ENCODE measurements at regions of chr10 and their contacts with region 1.

Region 1: GRCh38 chr10:101141616-101142532 is 10.8 kb downstream of the TLX1 start:
- DNase-seq: peak; percentile 72 to 85
- H3K4me3 ChIP-seq: no peak overlapping the region
- H3K27ac ChIP-seq: no peak overlapping the region
- H3K4me1 ChIP-seq: peaks cover 0 to 36% (median 23%) of the 10 kb centered on the region in 4 donors
- H3K27me3 ChIP-seq: peaks cover 0 to 98% of the 10 kb centered on the region in 2 donors
- CTCF ChIP-seq: peak; percentile 91 to 96

Region 2: GRCh38 chr10:101032637-101033201 is 109.2 kb before region 1 on chr10:
- intact Hi-C with region 1: no loop called
- DNase-seq: peak; percentile 80 to 87
- H3K4me3 ChIP-seq: peak overlapping the region; percentile 69 to 88
- H3K27ac ChIP-seq: peak overlapping the region; percentile 99
- H3K4me1 ChIP-seq: peaks cover 0 to 36% (median 22%) of the 10 kb centered on the region in 4 donors
- H3K27me3 ChIP-seq: peaks cover 0 to 8% of the 10 kb centered on the region in 2 donors
- CTCF ChIP-seq: no peak

Region 3: GRCh38 chr10:101047961-101048892 is 93.6 kb before region 1 on chr10:
- intact Hi-C with region 1: loop called (anchors 5 kb)
- DNase-seq: no peak
- H3K4me3 ChIP-seq: no peak overlapping the region
- H3K27ac ChIP-seq: no peak overlapping the region
- H3K4me1 ChIP-seq: peaks cover 0 to 23% (median 14%) of the 10 kb centered on the region in 4 donors
- H3K27me3 ChIP-seq: peaks cover 3 to 57% of the 10 kb centered on the region in 2 donors
- CTCF ChIP-seq: no peak

Region 4: GRCh38 chr10:101095542-101096213 is 46.2 kb before region 1 on chr10:
- intact Hi-C with region 1: loop called (anchors 2 kb)
- DNase-seq: peak; percentile 42 to 69
- H3K4me3 ChIP-seq: no peak overlapping the region
- H3K27ac ChIP-seq: no peak overlapping the region
- H3K4me1 ChIP-seq: no peaks in the 10 kb centered on the region
- H3K27me3 ChIP-seq: peaks cover 0 to 90% of the 10 kb centered on the region in 2 donors
- CTCF ChIP-seq: peak; percentile 69 to 78

Region 5: GRCh38 chr10:101107771-101108170 is 34.1 kb before region 1 on chr10:
- intact Hi-C with region 1: no loop called
- DNase-seq: no peak
- H3K4me3 ChIP-seq: no peak overlapping the region
- H3K27ac ChIP-seq: no peak overlapping the region
- H3K4me1 ChIP-seq: no peaks in the 10 kb centered on the region
- H3K27me3 ChIP-seq: peaks cover 0 to 60% of the 10 kb centered on the region in 2 donors
- CTCF ChIP-seq: no peak